Body of pancreas (tissue), 4 donors: ENCODE measurements at regions of chr19 and their contacts with region 1.

Region 1: DNA sequence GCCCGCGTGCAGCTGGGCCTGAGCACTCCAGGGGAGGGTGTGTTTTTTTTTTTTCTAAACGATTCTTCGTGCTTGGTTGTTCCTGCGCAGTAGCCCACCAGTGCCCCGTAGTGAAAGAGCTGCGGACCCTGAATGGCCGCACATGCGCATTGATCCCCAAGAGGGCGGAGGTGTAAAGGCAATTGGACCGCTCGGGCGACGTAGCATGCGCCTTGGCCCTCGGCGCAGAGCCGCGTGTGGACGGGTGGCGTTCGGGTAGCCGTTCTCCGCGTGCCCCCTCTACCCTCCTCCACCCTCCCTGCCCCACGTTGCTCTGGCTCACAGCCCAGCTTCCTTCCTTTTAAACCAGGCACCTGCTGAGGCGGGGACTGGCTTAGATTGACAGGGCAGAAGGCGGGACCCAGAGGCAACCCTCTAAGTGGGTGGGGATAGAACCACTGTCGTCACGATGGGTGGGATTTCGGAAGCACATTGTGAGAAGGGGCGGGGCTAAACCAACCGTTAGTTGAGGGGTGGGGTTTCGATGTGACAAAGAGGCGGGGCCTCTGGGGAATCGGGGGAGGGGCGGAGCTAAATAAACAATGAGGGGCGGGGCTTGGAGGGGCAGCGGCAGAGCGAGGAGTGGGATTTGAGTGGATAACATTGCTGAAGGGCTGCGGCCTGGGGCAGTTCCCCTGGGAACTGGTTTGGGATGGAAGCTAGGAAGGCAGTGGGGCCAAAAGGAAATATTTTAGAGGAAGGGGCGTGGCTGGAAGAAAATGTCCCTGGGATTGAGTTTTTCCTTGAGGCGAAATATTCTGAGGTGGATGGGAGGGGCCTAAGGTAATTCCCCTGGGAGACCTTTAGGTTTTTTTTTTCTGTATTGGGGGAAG is 543 bp upstream of the NUP62 start:
- DNase-seq: peak; percentile 93 to 96 (median 94)
- ATAC-seq: peak; percentile 89
- H3K4me3 ChIP-seq: peak overlapping the region; percentile 99 to 100
- H3K27ac ChIP-seq: peak overlapping the region; percentile 87 to 96 (median 91)
- H3K4me1 ChIP-seq: peaks cover 22% of the 10 kb centered on the region
- H3K27me3 ChIP-seq: no peaks in the 10 kb centered on the region
- CTCF ChIP-seq: peak in 3 of 7 experiments; percentile 25 to 59 (median 31)
- POLR2A ChIP-seq: peak; percentile 22 to 87 (median 81)

Region 2: GRCh38 chr19:49793445-49793783 is 136.4 kb before region 1 on chr19:
- intact Hi-C with region 1: no loop called
- DNase-seq: no peak
- ATAC-seq: no peak
- H3K4me3 ChIP-seq: no peak overlapping the region
- H3K27ac ChIP-seq: no peak overlapping the region
- H3K4me1 ChIP-seq: no peaks in the 10 kb centered on the region
- H3K27me3 ChIP-seq: no peaks in the 10 kb centered on the region
- CTCF ChIP-seq: no peak
- POLR2A ChIP-seq: no peak

Region 3: DNA sequence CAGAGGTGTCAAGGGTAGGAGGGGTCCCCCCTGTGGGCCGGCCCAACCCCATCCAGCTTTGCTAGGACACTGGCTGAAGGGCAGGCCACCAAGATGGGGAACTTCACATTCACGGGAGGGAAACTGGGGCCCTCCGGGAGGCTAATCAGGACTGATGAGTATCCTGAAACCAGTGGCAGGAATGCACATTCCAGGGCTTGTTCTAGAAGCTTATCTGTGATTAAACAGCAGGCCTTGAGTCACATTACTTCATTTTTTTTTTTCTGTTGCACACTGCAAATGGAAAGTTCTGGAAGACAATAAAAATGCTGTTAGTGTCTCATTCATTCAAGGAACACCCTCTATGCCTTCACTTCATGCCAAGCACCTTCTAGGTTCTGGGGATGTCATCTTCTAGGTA is 46.6 kb after region 1 on chr19:
- intact Hi-C with region 1: loop called (anchors 5 kb)
- DNase-seq: no peak
- ATAC-seq: no peak
- H3K4me3 ChIP-seq: no peak overlapping the region
- H3K27ac ChIP-seq: no peak overlapping the region
- H3K4me1 ChIP-seq: peaks cover 15% of the 10 kb centered on the region
- H3K27me3 ChIP-seq: no peaks in the 10 kb centered on the region
- CTCF ChIP-seq: no peak
- POLR2A ChIP-seq: no peak